Pancreas (tissue), 10 donors: ENCODE measurements at regions of chr16 and their contacts with region 1.

Region 1: DNA sequence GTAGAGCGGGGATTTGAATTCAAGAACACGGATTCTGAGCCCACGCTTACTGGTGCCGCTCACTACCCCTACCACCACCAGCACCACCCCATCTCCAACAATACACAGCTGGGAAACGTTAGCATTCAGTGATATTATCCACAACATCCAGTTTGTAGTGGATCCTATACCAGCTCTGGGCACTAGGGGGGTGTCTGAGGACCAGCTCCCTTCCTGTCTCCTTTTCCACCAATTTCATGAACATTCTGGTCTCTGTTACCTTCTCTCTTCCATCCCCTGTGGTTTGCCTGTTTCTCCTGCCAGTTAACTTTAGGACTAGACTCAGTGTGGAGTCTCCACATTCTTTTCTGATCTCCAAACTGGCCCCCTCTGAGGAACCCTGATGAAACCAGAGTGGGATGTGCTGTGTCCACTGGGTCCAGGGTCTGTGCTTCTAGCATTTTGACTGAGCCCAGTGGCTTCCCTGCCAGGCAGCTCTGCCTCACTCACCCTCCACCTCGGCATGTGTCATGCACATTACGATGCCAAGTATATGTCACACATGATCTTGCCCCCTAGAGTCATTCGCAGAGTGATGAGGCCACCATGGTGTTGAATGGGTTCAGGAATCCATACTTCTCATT is 187.0 kb upstream of the CDH13 start:
- DNase-seq: no peak
- ATAC-seq: peak in 1 of 4 donors; percentile 38
- H3K4me3 ChIP-seq: no peak overlapping the region
- H3K27ac ChIP-seq: no peak overlapping the region
- H3K4me1 ChIP-seq: no peaks in the 10 kb centered on the region
- H3K27me3 ChIP-seq: peaks cover 0 to 11% (median 2%) of the 10 kb centered on the region in 4 donors
- CTCF ChIP-seq: no peak

Region 2: GRCh38 chr16:82506692-82507670 is 67.2 kb after region 1 on chr16:
- intact Hi-C with region 1: loop called in 1 of 3 experiments (anchors 10 kb)
- DNase-seq: no peak
- ATAC-seq: no peak
- H3K4me3 ChIP-seq: no peak overlapping the region
- H3K27ac ChIP-seq: no peak overlapping the region
- H3K4me1 ChIP-seq: no peaks in the 10 kb centered on the region
- H3K27me3 ChIP-seq: no peaks in the 10 kb centered on the region
- CTCF ChIP-seq: no peak